ENCODE measurements at regions of chr10 and their contacts with region 1.

Region 1: GRCh38 chr10:75304741-75305380 is 69.1 kb upstream of the COMTD1 start:
- DNase-seq: no peak
- H3K4me3 Mint-ChIP-seq: no peak overlapping the region
- H3K27ac Mint-ChIP-seq: peak overlapping the region; percentile 80
- H3K4me1 Mint-ChIP-seq: peaks cover 17% of the 10 kb centered on the region
- H3K27me3 Mint-ChIP-seq: no peaks in the 10 kb centered on the region
- CTCF ChIP-seq: no peak

Region 2: GRCh38 chr10:75136346-75136745 is 168.5 kb before region 1 on chr10:
- CTCF ChIA-PET with region 1: no interaction called
- intact Hi-C with region 1: no loop called
- DNase-seq: no peak
- H3K4me3 Mint-ChIP-seq: no peak overlapping the region
- H3K27ac Mint-ChIP-seq: no peak overlapping the region
- H3K4me1 Mint-ChIP-seq: peaks cover 25% of the 10 kb centered on the region
- H3K27me3 Mint-ChIP-seq: no peaks in the 10 kb centered on the region
- CTCF ChIP-seq: no peak

Region 3: GRCh38 chr10:75261813-75262708 is 42.8 kb before region 1 on chr10:
- CTCF ChIA-PET with region 1: no interaction called
- intact Hi-C with region 1: loop called (anchors 1 kb)
- DNase-seq: no peak
- H3K4me3 Mint-ChIP-seq: peak overlapping the region; percentile 60
- H3K27ac Mint-ChIP-seq: peak overlapping the region; percentile 80
- H3K4me1 Mint-ChIP-seq: peaks cover 34% of the 10 kb centered on the region
- H3K27me3 Mint-ChIP-seq: no peaks in the 10 kb centered on the region
- CTCF ChIP-seq: no peak

Region 4: GRCh38 chr10:75272896-75273295 is 32.0 kb before region 1 on chr10:
- CTCF ChIA-PET with region 1: no interaction called
- intact Hi-C with region 1: no loop called
- DNase-seq: peak; percentile 37
- H3K4me3 Mint-ChIP-seq: no peak overlapping the region
- H3K27ac Mint-ChIP-seq: no peak overlapping the region
- H3K4me1 Mint-ChIP-seq: peaks cover 14% of the 10 kb centered on the region
- H3K27me3 Mint-ChIP-seq: no peaks in the 10 kb centered on the region
- CTCF ChIP-seq: no peak

Region 5: DNA sequence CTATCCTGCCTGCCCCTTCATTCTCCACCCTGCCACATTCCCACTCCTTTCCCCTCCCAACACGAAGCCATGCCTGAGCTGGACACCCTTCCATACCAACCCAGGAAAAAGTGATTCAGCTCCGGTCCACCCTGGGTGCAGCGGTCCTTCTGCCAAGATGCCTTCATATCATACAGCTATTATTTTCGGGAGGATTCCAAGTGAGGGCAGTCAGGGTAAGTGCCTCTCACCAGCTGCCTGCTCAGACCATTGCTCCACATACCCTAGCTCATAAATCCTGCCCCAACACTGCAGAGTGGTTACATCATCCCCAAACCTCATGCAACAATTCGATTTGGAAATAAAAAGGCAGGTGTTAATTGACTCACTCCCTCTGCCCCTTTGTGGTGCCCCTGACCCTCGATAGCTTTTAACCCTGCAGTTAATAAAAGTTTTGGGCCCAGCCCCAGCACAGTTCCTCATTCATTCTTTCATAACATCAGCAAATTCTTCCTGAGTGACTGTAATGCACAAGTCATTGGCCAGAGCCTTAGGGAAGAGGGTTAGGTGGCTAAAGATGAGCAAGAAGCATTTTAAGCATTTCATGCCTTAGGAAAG is 54.1 kb after region 1 on chr10:
- CTCF ChIA-PET with region 1: no interaction called
- intact Hi-C with region 1: loop called (anchors 5 kb)
- DNase-seq: peak; percentile 59
- H3K4me3 Mint-ChIP-seq: no peak overlapping the region
- H3K27ac Mint-ChIP-seq: peak overlapping the region; percentile 71
- H3K4me1 Mint-ChIP-seq: peaks cover 26% of the 10 kb centered on the region
- H3K27me3 Mint-ChIP-seq: no peaks in the 10 kb centered on the region
- CTCF ChIP-seq: no peak

Region 6: GRCh38 chr10:75632805-75633462 is 328.1 kb after region 1 on chr10:
- CTCF ChIA-PET with region 1: no interaction called
- intact Hi-C with region 1: no loop called
- DNase-seq: no peak
- H3K4me3 Mint-ChIP-seq: no peak overlapping the region
- H3K27ac Mint-ChIP-seq: no peak overlapping the region
- H3K4me1 Mint-ChIP-seq: no peaks in the 10 kb centered on the region
- H3K27me3 Mint-ChIP-seq: peaks cover 29% of the 10 kb centered on the region
- CTCF ChIP-seq: no peak

Region 7: DNA sequence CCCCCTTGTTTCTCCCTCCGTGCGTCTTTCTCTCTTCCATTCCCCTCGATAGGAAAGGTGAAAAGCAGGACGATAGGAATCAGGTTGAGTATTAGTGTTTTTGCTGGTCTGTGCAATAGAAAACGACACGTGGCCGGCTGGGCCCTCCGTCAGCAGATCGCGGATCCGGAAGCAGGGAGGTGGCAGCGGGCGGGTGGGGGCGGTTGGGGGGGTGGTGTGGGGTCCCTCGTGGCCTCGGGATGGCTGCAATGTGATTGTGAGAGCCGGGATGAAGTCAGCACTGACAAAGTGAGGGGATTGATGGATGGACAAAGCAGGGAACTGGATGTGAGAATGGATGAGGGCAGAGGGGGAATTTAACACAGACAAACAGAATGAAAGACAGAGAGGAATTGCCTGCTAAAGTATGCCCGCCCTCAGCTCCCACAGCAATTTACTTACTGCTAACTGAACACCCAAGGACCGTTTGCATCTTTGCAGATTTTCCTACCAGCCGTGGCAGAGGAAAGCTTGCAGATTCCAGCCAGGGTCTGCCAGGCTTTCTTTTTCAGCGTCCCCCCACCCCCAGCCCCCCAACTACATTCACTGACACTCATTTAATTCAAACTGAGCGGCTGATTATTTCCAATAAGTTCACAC is 407.5 kb after region 1 on chr10:
- CTCF ChIA-PET with region 1: no interaction called
- intact Hi-C with region 1: no loop called
- DNase-seq: no peak
- H3K4me3 Mint-ChIP-seq: no peak overlapping the region
- H3K27ac Mint-ChIP-seq: no peak overlapping the region
- H3K4me1 Mint-ChIP-seq: no peaks in the 10 kb centered on the region
- H3K27me3 Mint-ChIP-seq: peaks cover 85% of the 10 kb centered on the region
- CTCF ChIP-seq: no peak

Measured in Calu3 (cell line).